ENCODE measurements at regions of chr10 and their contacts with region 1.

Region 1: GRCh38 chr10:52488606-52489485 is 174.8 kb downstream of the DKK1 start:
- DNase-seq: no peak
- H3K4me3 ChIP-seq: no peak overlapping the region
- H3K27ac ChIP-seq: no peak overlapping the region
- H3K4me1 ChIP-seq: no peaks in the 10 kb centered on the region
- H3K27me3 ChIP-seq: no peaks in the 10 kb centered on the region
- CTCF ChIP-seq: peak in 4 of 6 experiments; percentile 26 to 51 (median 47)
- POLR2A ChIP-seq: no peak

Region 2: GRCh38 chr10:52313933-52314816 is 174.7 kb before region 1 on chr10 and contains the start of gene DKK1:
- intact Hi-C with region 1: loop called (anchors 10 kb)
- DNase-seq: peak; percentile 29 to 36
- H3K4me3 ChIP-seq: peak within 1 kb of the TSS; percentile 4 to 64 (median 32)
- H3K27ac ChIP-seq: no peak within 1 kb of the TSS
- H3K4me1 ChIP-seq: peaks cover 0 to 23% of the 10 kb centered on the region in 2 donors
- H3K27me3 ChIP-seq: no peaks in the 10 kb centered on the region
- CTCF ChIP-seq: peak in 4 of 6 experiments; percentile 11 to 50 (median 36)
- POLR2A ChIP-seq: no peak
- total RNA-seq, gene DKK1: 1.7 to 3.2 TPM in 2 of 4 donors, not detected in the others

Measured in thyroid gland (tissue), 4 donors.